ENCODE measurements at regions of chr13 and their contacts with region 1.

Region 1: GRCh38 chr13:76828316-76828741 is 57.9 kb downstream of the KCTD12 start:
- DNase-seq: no peak
- ATAC-seq: no peak
- H3K4me3 ChIP-seq: no peak overlapping the region
- H3K27ac ChIP-seq: peak overlapping the region in 2 of 10 donors; percentile 69 to 89
- H3K4me1 ChIP-seq: peaks cover 0 to 26% (median 16%) of the 10 kb centered on the region in 9 donors
- H3K27me3 ChIP-seq: no peaks in the 10 kb centered on the region
- CTCF ChIP-seq: no peak

Region 2: GRCh38 chr13:76696370-76696769 is 132.0 kb before region 1 on chr13:
- intact Hi-C with region 1: no loop called
- DNase-seq: no peak
- ATAC-seq: peak in 2 of 8 donors; percentile 14 to 34
- H3K4me3 ChIP-seq: no peak overlapping the region
- H3K27ac ChIP-seq: no peak overlapping the region
- H3K4me1 ChIP-seq: peaks cover 0 to 8% (median 0%) of the 10 kb centered on the region in 9 donors
- H3K27me3 ChIP-seq: no peaks in the 10 kb centered on the region
- CTCF ChIP-seq: no peak

Region 3: GRCh38 chr13:76769271-76769791 is 59.0 kb before region 1 on chr13:
- intact Hi-C with region 1: no loop called
- DNase-seq: no peak
- ATAC-seq: no peak
- H3K4me3 ChIP-seq: no peak overlapping the region
- H3K27ac ChIP-seq: no peak overlapping the region
- H3K4me1 ChIP-seq: peaks cover 0 to 15% (median 7%) of the 10 kb centered on the region in 9 donors
- H3K27me3 ChIP-seq: no peaks in the 10 kb centered on the region
- CTCF ChIP-seq: no peak

Region 4: GRCh38 chr13:76861859-76862258 is 33.5 kb after region 1 on chr13:
- intact Hi-C with region 1: no loop called
- DNase-seq: no peak
- ATAC-seq: no peak
- H3K4me3 ChIP-seq: no peak overlapping the region
- H3K27ac ChIP-seq: no peak overlapping the region
- H3K4me1 ChIP-seq: peaks cover 0 to 4% (median 0%) of the 10 kb centered on the region in 9 donors
- H3K27me3 ChIP-seq: no peaks in the 10 kb centered on the region
- CTCF ChIP-seq: no peak

Region 5: GRCh38 chr13:76874479-76874878 is 46.1 kb after region 1 on chr13:
- intact Hi-C with region 1: loop called in 1 of 10 experiments (anchors 5 kb)
- DNase-seq: no peak
- ATAC-seq: no peak
- H3K4me3 ChIP-seq: no peak overlapping the region
- H3K27ac ChIP-seq: peak overlapping the region in 1 of 10 donors; percentile 11
- H3K4me1 ChIP-seq: peaks cover 0 to 33% (median 11%) of the 10 kb centered on the region in 9 donors
- H3K27me3 ChIP-seq: no peaks in the 10 kb centered on the region
- CTCF ChIP-seq: no peak

Region 6: GRCh38 chr13:76958841-76959432 is 130.6 kb after region 1 on chr13:
- intact Hi-C with region 1: no loop called
- DNase-seq: no peak
- ATAC-seq: no peak
- H3K4me3 ChIP-seq: no peak overlapping the region
- H3K27ac ChIP-seq: no peak overlapping the region
- H3K4me1 ChIP-seq: no peaks in the 10 kb centered on the region
- H3K27me3 ChIP-seq: peaks cover 0 to 5% (median 0%) of the 10 kb centered on the region in 7 donors
- CTCF ChIP-seq: no peak